ENCODE measurements at regions of chr12 and their contacts with region 1.

Region 1: GRCh38 chr12:45388545-45388944 is 172.7 kb downstream of the ANO6 start:
- DNase-seq: peak; percentile 48
- H3K4me3 Mint-ChIP-seq: no peak overlapping the region
- H3K27ac Mint-ChIP-seq: no peak overlapping the region
- H3K4me1 Mint-ChIP-seq: no peaks in the 10 kb centered on the region
- H3K27me3 Mint-ChIP-seq: no peaks in the 10 kb centered on the region
- CTCF ChIP-seq: peak; percentile 50

Region 2: DNA sequence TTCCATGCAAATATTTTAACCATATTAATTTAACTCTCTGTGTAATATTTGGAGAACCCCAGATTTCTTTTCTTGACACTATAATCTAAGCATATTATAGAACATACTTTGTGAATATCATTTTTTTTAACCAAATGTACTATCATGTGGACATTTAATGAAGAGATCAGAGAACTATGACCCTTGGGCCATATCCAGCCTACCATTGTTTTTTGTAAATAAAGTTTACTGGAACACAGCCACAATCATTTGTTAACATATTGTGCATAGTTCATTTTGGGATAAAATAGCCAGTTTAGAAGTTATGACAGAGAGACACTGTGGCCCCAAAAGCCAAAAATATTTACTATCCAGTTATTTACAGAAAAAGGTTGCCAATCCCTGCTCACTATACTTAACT is 1214.5 kb before region 1 on chr12:
- CTCF ChIA-PET with region 1: no interaction called
- POLR2A ChIA-PET with region 1: no interaction called
- intact Hi-C with region 1: no loop called
- DNase-seq: no peak
- H3K4me3 Mint-ChIP-seq: no peak overlapping the region
- H3K27ac Mint-ChIP-seq: no peak overlapping the region
- H3K4me1 Mint-ChIP-seq: no peaks in the 10 kb centered on the region
- H3K27me3 Mint-ChIP-seq: no peaks in the 10 kb centered on the region
- CTCF ChIP-seq: no peak

Region 3: GRCh38 chr12:45170456-45171042 is 218.0 kb before region 1 on chr12:
- CTCF ChIA-PET with region 1: interaction called, 32 read pairs
- POLR2A ChIA-PET with region 1: no interaction called
- intact Hi-C with region 1: loop called (anchors 1 kb)
- DNase-seq: peak; percentile 84
- H3K4me3 Mint-ChIP-seq: no peak overlapping the region
- H3K27ac Mint-ChIP-seq: no peak overlapping the region
- H3K4me1 Mint-ChIP-seq: no peaks in the 10 kb centered on the region
- H3K27me3 Mint-ChIP-seq: no peaks in the 10 kb centered on the region
- CTCF ChIP-seq: peak; percentile 85

Region 4: DNA sequence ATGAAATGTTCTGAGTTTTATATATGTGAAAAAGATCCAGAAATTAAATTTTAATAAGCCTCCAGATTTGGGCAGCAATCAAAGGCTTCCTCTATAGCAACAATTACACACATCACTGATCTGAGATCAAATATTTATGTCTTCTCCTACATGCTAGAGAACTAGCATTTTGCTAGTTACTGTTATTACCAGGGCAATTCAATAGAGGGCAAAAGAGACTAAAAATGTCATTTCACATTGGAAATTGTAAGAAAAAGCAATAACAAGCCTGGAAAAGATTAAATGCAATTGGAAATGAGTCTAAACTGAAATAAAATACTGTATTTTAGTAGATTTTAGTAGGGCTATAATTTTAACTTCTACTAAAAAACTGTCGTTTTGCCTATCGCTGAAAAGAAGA is 205.3 kb before region 1 on chr12:
- CTCF ChIA-PET with region 1: interaction called, 40 read pairs
- POLR2A ChIA-PET with region 1: no interaction called
- intact Hi-C with region 1: no loop called
- DNase-seq: no peak
- H3K4me3 Mint-ChIP-seq: no peak overlapping the region
- H3K27ac Mint-ChIP-seq: no peak overlapping the region
- H3K4me1 Mint-ChIP-seq: no peaks in the 10 kb centered on the region
- H3K27me3 Mint-ChIP-seq: no peaks in the 10 kb centered on the region
- CTCF ChIP-seq: peak; percentile 49

Region 5: DNA sequence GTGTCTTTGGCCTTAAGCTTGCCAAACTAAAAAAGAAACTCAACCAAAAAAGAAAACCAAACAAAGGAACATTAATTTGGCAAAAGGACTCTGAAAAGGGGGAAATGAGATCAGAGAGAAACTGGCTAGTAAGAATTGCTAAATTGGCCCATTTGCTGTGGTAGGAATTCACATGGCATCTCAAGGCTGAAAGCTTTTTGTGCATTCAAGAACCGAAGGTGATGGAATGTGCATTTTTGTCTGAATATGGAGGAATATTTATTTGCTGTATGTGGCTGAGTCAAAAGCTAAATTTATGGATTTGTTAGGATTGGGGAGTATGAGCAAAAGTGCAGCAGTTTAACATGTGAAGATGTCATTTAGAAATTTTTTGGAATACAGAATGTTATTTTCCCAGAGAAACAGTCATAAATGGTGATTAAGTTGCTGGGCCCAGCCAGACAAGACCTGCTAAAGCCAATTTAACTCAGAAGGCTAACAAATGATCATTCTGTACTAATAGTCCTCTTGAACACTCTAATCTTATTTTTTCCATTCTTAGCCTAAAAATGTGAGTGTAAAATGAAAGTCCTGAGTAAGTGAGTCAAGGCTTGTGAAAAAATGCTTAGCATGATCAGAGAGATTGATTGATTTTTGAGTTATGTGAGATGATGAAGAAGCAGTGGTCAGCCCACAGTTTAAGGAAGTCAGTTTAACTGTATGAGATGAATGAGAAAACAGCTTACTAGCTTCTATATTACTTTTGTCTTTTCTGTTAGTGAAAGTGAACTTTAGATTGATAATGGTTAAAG is 78.5 kb before region 1 on chr12:
- CTCF ChIA-PET with region 1: interaction called, 12 read pairs
- POLR2A ChIA-PET with region 1: no interaction called
- intact Hi-C with region 1: no loop called
- DNase-seq: no peak
- H3K4me3 Mint-ChIP-seq: no peak overlapping the region
- H3K27ac Mint-ChIP-seq: no peak overlapping the region
- H3K4me1 Mint-ChIP-seq: no peaks in the 10 kb centered on the region
- H3K27me3 Mint-ChIP-seq: no peaks in the 10 kb centered on the region
- CTCF ChIP-seq: no peak

Region 6: DNA sequence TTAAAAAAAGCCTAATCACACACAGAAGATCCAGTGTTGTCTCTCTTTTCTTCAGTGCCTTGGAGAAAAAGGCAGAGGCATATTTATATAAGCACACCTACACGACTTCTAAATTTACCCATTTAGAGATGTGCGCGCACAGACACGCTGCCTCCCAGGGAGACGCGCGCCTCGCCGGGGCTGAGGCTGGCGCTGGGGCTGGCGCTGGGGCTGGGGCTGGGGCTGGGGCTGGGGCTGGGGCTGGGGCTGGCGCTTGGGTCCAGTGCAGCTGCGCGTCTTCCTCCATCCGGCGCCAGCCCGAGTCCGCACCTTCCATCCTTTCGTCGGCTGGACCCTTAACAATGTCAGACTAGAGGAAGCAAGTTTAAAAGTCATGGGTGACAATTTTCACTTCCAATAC is 222.5 kb after region 1 on chr12:
- CTCF ChIA-PET with region 1: no interaction called
- POLR2A ChIA-PET with region 1: no interaction called
- intact Hi-C with region 1: no loop called
- DNase-seq: no peak
- H3K4me3 Mint-ChIP-seq: no peak overlapping the region
- H3K27ac Mint-ChIP-seq: no peak overlapping the region
- H3K4me1 Mint-ChIP-seq: peaks cover 17% of the 10 kb centered on the region
- H3K27me3 Mint-ChIP-seq: no peaks in the 10 kb centered on the region
- CTCF ChIP-seq: no peak

Measured in MCF 10A (cell line).